ENCODE measurements at regions of chr20 and their contacts with region 1.

Region 1: GRCh38 chr20:20593447-20594170 is 118.8 kb downstream of the RALGAPA2 start:
- DNase-seq: peak; percentile 49
- H3K4me3 ChIP-seq: peak overlapping the region in 1 of 2 experiments; percentile 27; a peak in 1 of 4 replicates
- H3K27ac ChIP-seq: no peak overlapping the region
- H3K4me1 ChIP-seq: no peaks in the 10 kb centered on the region; a peak in 1 of 4 replicates
- H3K27me3 ChIP-seq: no peaks in the 10 kb centered on the region
- CTCF ChIP-seq: peak; percentile 63
- EP300 ChIP-seq: no peak
- RAD21 ChIP-seq: peak; percentile 55

Region 2: GRCh38 chr20:20073801-20074371 is 519.7 kb before region 1 on chr20:
- CTCF ChIA-PET with region 1: interaction called, 10 read pairs
- POLR2A ChIA-PET with region 1: no interaction called
- DNase-seq: no peak
- H3K4me3 ChIP-seq: no peak overlapping the region
- H3K27ac ChIP-seq: no peak overlapping the region
- H3K4me1 ChIP-seq: no peaks in the 10 kb centered on the region; a peak in 1 of 4 replicates
- H3K27me3 ChIP-seq: no peaks in the 10 kb centered on the region
- CTCF ChIP-seq: no peak
- EP300 ChIP-seq: no peak
- RAD21 ChIP-seq: no peak

Region 3: GRCh38 chr20:20248620-20249200 is 344.9 kb before region 1 on chr20:
- CTCF ChIA-PET with region 1: interaction called, 11 read pairs
- POLR2A ChIA-PET with region 1: no interaction called
- DNase-seq: no peak
- H3K4me3 ChIP-seq: no peak overlapping the region
- H3K27ac ChIP-seq: no peak overlapping the region
- H3K4me1 ChIP-seq: peaks cover 0 to 6% of the 10 kb centered on the region in 2 experiments; a peak in 2 of 4 replicates
- H3K27me3 ChIP-seq: no peaks in the 10 kb centered on the region; the same call in 1 of the 2 replicates
- CTCF ChIP-seq: no peak
- EP300 ChIP-seq: no peak
- RAD21 ChIP-seq: no peak

Region 4: GRCh38 chr20:20568604-20569205 is 24.9 kb before region 1 on chr20:
- CTCF ChIA-PET with region 1: interaction called, 10 read pairs
- POLR2A ChIA-PET with region 1: no interaction called
- DNase-seq: peak; percentile 31
- H3K4me3 ChIP-seq: no peak overlapping the region; a peak in 1 of 4 replicates
- H3K27ac ChIP-seq: no peak overlapping the region
- H3K4me1 ChIP-seq: no peaks in the 10 kb centered on the region; a peak in 1 of 4 replicates
- H3K27me3 ChIP-seq: no peaks in the 10 kb centered on the region
- CTCF ChIP-seq: peak; percentile 89
- EP300 ChIP-seq: no peak
- RAD21 ChIP-seq: peak; percentile 97

Region 5: DNA sequence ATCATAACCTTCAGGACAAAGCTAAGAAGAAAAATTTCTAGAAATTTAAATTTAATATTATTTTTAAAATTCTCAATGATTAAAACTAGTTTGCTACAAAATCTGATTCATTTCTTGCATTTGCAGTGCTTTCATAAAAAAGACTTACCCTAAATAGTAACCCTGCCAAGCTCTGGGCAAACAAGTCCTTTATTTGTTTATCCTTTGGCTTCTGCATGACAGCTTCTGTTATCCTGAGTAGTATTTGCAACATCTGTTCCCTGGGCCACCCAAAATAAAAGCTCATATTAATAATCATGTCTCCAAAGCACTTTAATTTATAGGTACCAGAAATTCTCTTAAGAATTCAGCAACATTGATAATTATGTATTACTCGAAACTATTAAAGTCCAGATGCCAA is 17.6 kb after region 1 on chr20:
- CTCF ChIA-PET with region 1: interaction called, 30 read pairs
- POLR2A ChIA-PET with region 1: no interaction called
- DNase-seq: no peak
- H3K4me3 ChIP-seq: no peak overlapping the region
- H3K27ac ChIP-seq: no peak overlapping the region
- H3K4me1 ChIP-seq: no peaks in the 10 kb centered on the region; a peak in 1 of 4 replicates
- H3K27me3 ChIP-seq: no peaks in the 10 kb centered on the region
- CTCF ChIP-seq: no peak
- EP300 ChIP-seq: no peak
- RAD21 ChIP-seq: no peak

Region 6: GRCh38 chr20:20824924-20825584 is 231.4 kb after region 1 on chr20:
- CTCF ChIA-PET with region 1: interaction called, 19 read pairs
- POLR2A ChIA-PET with region 1: no interaction called
- DNase-seq: peak; percentile 56
- H3K4me3 ChIP-seq: peak overlapping the region in 1 of 2 experiments; percentile 46; a peak in 1 of 4 replicates
- H3K27ac ChIP-seq: no peak overlapping the region
- H3K4me1 ChIP-seq: no peaks in the 10 kb centered on the region
- H3K27me3 ChIP-seq: peaks cover 40% of the 10 kb centered on the region
- CTCF ChIP-seq: peak; percentile 75
- EP300 ChIP-seq: no peak
- RAD21 ChIP-seq: peak; percentile 68